ENCODE measurements at regions of chr17 and their contacts with region 1.

Region 1: GRCh38 chr17:66301797-66302741 is at the start of gene PRKCA:
- DNase-seq: peak; percentile 64
- H3K4me3 ChIP-seq: peak within 1 kb of the TSS; percentile 46 to 64
- H3K27ac ChIP-seq: peak within 1 kb of the TSS; percentile 79
- H3K4me1 ChIP-seq: no peaks in the 10 kb centered on the region
- H3K27me3 ChIP-seq: no peaks in the 10 kb centered on the region
- CTCF ChIP-seq: no peak
- POLR2A ChIP-seq: peak; percentile 82
- total RNA-seq, gene PRKCA: 8.3 to 26.5 TPM

Region 2: DNA sequence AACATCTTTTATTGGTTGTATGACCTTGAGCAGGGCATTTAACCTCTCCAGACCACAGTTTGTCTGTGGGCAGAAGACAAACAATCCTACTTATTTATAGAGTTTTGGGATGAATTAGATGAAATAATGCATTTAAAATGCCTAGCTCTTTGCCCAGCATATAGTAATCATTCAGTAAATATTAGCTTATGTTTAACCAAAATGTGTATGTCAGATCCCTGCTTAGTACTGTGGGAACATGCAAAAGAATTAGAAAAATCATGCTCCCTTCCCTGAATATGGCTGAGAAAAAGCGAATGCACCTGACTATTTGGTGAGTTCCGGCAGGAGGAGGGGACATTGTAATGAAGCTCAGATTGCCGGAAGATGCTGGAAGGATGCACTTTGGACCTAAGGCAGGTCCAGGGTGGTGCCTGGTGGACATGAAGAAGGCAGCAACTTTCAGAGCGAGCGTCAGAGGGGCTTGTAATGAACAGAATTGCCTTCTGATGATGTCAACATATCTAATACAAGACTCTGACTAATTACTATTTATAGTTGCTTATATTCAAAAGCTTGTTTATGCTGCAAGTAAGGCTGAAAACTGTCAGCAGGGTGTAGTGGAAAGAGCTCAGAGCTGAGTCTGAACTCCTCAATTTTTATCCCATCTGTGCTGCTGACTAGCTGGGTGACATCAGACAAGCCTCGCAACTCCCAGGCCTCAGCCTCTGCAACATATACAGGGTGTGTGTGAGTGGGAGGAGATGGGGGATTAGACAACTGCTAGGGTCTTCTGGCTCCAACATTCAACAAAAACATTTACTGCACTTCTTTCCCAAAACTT is 221.5 kb after region 1 on chr17:
- intact Hi-C with region 1: loop called (anchors 5 kb)
- DNase-seq: no peak
- H3K4me3 ChIP-seq: no peak overlapping the region
- H3K27ac ChIP-seq: peak overlapping the region in 1 of 2 donors; percentile 28
- H3K4me1 ChIP-seq: peaks cover 4% of the 10 kb centered on the region
- H3K27me3 ChIP-seq: no peaks in the 10 kb centered on the region
- CTCF ChIP-seq: no peak
- POLR2A ChIP-seq: no peak

Region 3: DNA sequence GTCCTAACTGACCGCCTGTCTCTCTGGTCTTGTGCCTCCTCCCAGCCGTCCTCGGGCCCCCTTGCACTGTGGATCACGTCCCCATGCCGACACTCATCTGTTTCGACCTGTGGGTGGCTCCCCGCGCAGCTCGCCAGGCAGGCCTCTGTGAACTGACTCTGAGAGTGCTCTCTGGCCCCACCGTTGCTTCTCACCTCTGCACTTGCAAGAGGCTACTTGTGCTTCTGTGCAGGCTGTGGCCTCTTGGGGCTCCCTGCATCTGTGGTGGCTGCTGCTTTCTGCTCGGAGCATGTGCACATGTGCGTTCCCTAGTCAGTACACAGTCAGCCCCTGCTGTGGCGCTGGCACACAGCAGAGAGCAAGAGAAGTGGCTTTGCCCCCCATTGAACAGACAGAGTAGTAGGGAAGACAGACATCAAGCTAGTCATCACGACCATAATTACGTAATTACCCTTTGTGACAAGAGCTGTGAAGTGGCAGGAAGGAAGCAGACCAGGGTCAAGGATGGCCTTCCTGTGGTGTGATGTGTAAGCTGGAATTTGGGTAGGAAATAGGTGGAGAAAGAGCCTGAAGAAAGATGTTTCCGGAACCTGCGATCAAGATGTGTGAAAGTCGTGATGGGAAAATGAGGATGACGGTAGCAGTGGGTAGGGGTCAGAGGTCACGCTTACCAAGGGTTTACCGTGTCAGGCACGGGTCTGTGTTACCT is 276.9 kb after region 1 on chr17:
- intact Hi-C with region 1: loop called (anchors 5 kb)
- DNase-seq: no peak
- H3K4me3 ChIP-seq: no peak overlapping the region
- H3K27ac ChIP-seq: peak overlapping the region; percentile 45 to 53
- H3K4me1 ChIP-seq: no peaks in the 10 kb centered on the region
- H3K27me3 ChIP-seq: no peaks in the 10 kb centered on the region
- CTCF ChIP-seq: no peak
- POLR2A ChIP-seq: no peak